Activated CD8-positive, alpha-beta T cell treated with anti-CD3 and anti-CD28 coated beads for 36 hours (primary cell): ENCODE measurements at regions of chr1 and their contacts with region 1.

Region 1: DNA sequence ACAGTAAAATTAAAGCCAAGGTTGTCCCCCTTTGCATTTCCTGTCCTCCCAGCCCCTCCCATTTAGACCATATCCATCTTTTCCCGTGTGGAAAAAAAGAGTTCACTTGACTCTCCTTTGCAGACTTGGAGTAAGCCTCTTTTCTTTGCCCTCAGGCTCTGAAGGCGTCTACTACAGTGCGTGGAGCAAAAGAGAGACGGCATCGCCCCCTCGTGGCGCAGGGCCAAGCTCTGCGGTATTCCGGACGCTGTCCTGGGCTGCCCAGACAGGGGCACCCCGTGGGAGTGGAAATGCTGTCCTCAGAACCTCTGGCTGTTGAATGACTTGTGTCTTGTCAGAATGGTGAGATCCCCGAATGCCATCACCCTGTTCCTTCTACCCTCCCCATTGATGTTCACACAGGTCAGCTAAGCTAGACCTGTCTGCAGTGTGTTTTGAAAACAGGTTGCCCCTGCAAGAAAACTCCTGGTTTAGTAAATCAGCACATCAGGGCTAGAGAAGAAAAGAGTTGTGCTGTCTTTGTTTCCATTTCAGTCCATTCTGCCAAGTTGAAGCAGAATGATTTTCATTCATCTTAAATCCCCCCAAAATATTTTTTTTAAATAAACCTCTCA is 12.3 kb upstream of the GJA8 start:
- DNase-seq: peak; percentile 80
- ATAC-seq: peak; percentile 86
- H3K4me3 Mint-ChIP-seq: no peak overlapping the region
- H3K27ac Mint-ChIP-seq: no peak overlapping the region
- H3K4me1 Mint-ChIP-seq: peaks cover 2% of the 10 kb centered on the region
- H3K27me3 Mint-ChIP-seq: peaks cover 1% of the 10 kb centered on the region
- CTCF ChIP-seq: peak; percentile 81

Region 2: DNA sequence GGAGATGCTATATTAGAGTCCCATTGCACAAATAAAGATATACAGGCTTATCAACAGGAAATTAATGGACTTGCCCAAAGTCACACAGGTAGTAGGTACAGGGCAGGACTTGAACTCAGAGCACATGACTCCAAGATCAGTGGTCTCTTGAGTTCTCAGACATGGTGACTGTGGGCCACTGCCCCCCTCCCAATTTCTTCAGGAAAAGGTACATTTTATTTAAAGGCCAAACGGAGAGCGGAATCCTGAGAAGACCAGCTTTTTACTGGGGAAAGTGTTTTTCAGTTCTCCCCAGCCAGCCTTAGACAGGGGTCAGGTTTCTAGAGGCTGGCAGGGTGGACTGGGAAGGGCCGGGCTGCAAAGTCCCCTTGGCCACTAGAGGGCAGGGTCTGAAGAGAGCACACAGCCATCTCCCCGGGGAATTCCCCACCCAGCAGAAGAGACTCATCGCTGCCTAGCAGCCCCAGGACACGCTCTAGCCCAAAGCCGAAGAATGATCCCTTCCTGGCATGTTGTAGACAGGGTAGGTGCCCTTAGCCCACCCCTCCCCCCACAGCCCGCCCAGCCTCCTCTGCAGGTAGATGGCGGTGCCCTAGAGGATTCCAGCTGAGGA is 249.6 kb before region 1 on chr1:
- CTCF ChIA-PET with region 1: interaction called, 11 read pairs
- POLR2A ChIA-PET with region 1: no interaction called
- intact Hi-C with region 1: loop called (anchors 5 kb)
- DNase-seq: peak; percentile 90
- ATAC-seq: peak; percentile 100
- H3K4me3 Mint-ChIP-seq: no peak overlapping the region
- H3K27ac Mint-ChIP-seq: no peak overlapping the region
- H3K4me1 Mint-ChIP-seq: peaks cover 21% of the 10 kb centered on the region
- H3K27me3 Mint-ChIP-seq: no peaks in the 10 kb centered on the region
- CTCF ChIP-seq: peak; percentile 89

Region 3: DNA sequence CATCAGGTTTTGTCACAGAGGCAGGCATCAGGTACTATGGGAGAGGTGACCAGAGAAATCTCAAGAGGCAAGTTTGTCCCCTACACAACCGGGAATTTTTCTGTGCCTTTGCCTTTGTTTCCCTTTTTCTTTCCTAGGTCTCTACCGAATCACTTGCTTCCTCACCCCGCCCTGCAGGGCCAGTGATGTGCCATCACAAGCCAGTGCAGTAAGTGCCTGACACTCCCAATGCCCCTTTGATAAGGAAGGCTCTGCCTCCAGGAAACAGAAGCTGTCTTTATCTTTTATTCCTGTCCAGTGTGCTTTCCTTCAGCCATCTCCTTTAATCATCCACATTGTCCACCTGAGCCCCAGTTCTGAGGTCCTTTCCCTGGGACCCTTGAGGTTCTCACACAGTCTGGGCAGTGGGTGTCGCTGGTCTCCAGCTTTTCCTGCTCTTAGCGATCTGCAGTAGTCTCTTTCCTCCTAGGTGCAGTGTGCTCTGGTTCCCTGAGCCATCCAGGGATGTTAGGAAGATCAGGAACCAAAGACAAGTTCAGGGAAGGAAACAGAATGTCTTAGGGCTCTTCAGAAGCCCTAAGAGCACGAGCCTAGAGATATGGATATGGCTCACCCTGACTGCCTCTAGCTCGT is 166.5 kb before region 1 on chr1:
- CTCF ChIA-PET with region 1: interaction called, 18 read pairs
- POLR2A ChIA-PET with region 1: no interaction called
- intact Hi-C with region 1: loop called (anchors 5 kb)
- DNase-seq: peak; percentile 27
- ATAC-seq: peak; percentile 65
- H3K4me3 Mint-ChIP-seq: no peak overlapping the region
- H3K27ac Mint-ChIP-seq: no peak overlapping the region
- H3K4me1 Mint-ChIP-seq: no peaks in the 10 kb centered on the region
- H3K27me3 Mint-ChIP-seq: peaks cover 18% of the 10 kb centered on the region
- CTCF ChIP-seq: no peak

Region 4: DNA sequence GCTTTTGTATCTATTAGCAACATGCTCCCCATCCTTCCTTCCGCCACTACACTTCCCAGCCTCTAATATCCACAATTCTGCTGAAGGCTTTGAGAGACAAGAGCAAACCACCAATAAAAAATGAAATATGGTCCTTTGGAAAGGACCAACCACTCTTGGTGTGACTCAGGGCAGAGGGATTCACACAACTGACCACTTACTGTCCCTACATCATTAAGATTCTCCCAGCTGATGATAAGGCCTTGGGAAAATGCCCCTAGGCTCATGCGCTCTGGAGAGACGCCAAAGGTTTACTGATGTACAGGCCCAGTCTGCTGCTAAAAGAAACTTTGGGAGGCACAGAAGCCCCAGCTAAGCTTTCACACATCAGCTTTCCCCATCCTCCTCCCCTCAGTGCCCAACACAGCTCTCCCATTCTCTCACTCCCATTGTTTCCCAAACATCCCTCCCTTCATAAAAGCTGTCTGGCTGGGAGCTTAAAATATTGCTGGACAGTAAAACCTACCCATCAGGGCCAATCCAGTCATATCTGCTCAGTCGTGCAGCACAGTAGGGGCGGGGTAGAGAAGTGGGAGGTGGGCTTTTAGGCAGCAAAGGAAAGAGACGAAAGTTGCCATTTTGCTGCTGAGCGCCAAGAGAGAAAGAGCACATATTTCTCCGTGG is 12.0 kb after region 1 on chr1 and contains the start of gene GJA8:
- CTCF ChIA-PET with region 1: interaction called, 21 read pairs
- POLR2A ChIA-PET with region 1: no interaction called
- intact Hi-C with region 1: no loop called
- DNase-seq: no peak
- ATAC-seq: no peak
- H3K4me3 Mint-ChIP-seq: no peak within 1 kb of the TSS
- H3K27ac Mint-ChIP-seq: no peak within 1 kb of the TSS
- H3K4me1 Mint-ChIP-seq: peaks cover 8% of the 10 kb centered on the region
- H3K27me3 Mint-ChIP-seq: no peaks in the 10 kb centered on the region
- CTCF ChIP-seq: no peak
- total RNA-seq, gene GJA8: not detected

Region 5: DNA sequence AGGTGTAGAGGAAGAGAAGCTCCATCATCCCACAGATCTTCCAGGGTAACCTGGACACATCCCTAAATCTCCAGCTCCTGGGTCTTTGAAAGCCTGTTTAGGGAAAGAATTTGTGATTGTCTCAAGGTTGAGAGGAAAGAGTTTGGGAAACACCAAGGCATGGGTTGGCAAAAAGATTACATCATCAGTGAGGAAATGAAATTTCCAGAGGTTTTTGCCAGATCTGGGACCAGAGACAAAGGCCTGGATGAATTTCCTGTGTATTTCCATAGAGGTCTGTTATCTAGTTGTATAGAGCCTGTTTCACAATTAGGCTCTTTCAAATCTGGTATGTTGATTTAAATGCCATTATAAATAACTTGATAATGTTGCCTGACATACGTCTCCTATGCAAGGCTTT is 120.2 kb after region 1 on chr1:
- CTCF ChIA-PET with region 1: no interaction called
- POLR2A ChIA-PET with region 1: no interaction called
- intact Hi-C with region 1: no loop called
- DNase-seq: no peak
- ATAC-seq: no peak
- H3K4me3 Mint-ChIP-seq: no peak overlapping the region
- H3K27ac Mint-ChIP-seq: no peak overlapping the region
- H3K4me1 Mint-ChIP-seq: peaks cover 2% of the 10 kb centered on the region
- H3K27me3 Mint-ChIP-seq: peaks cover 18% of the 10 kb centered on the region
- CTCF ChIP-seq: no peak